Caco-2 (cell line): ENCODE measurements at regions of chr18 and their contacts with region 1.

Region 1: DNA sequence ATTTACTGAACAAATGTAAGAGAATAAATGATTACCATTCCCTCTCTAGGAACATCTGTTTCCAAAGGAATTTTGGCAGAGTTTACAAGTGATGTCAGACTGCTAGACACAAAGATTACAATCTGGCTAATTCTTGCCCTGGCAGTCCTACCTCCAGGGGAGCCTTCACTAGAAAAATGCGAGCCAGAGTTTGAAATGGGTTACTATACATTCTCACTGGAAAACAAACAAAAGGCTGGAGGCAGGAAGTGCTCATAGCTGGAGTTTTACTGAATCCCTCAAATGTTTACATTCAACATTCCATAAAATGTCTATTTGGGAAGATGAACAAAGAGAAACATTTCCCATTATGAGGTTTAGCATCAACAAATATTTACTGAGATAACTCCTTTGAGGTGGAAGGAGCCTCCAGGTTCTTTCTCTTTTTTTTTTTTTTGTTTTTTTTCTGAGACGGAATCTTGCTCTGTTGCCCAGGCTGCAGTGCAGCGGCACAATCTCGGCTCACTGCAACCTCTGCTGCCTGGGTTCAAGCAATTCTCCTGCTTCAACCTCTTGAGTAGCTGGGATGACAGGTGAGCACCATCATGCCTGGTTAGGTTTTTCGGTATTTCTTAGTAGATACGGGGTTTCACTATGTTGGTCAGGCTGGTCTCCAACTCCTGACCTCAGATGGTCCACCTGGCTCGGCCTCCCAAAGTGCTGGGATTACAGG is 129.0 kb upstream of the MAPRE2 start:
- DNase-seq: peak; percentile 57 to 67
- H3K4me3 ChIP-seq: no peak overlapping the region
- H3K4me3 Mint-ChIP-seq: no peak overlapping the region
- H3K27ac Mint-ChIP-seq: peak overlapping the region; percentile 25
- H3K4me1 ChIP-seq: peaks cover 34% of the 10 kb centered on the region
- H3K4me1 Mint-ChIP-seq: no peaks in the 10 kb centered on the region
- H3K27me3 ChIP-seq: no peaks in the 10 kb centered on the region
- H3K27me3 Mint-ChIP-seq: no peaks in the 10 kb centered on the region
- CTCF ChIP-seq: peak in 1 of 2 experiments; percentile 2

Region 2: DNA sequence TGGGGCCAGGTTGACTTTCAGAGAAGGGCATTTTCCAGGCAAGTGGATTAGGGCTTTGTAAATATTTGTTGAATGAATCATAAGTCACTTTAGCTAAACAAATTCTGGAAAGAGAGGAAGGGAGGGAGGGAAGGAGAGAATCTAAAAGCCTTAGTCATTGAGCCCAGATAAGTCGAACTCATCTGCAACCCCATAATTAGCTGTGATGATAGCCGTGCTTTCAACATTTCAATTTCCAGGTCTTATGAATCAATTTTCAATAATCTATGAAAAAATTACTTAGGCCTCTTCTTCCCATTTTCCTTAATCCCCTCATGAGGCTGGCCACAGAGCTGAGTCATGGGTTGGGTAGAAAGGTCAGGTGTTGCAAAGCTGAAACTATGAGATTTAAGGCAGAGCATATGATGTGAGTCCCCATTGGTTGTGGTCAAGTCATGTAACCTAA is 17.2 kb after region 1 on chr18:
- CTCF ChIA-PET with region 1: no interaction called
- POLR2A ChIA-PET with region 1: no interaction called
- intact Hi-C with region 1: loop called (anchors 1 kb)
- DNase-seq: peak; percentile 32 to 36
- H3K4me3 ChIP-seq: no peak overlapping the region
- H3K4me3 Mint-ChIP-seq: peak overlapping the region; percentile 11
- H3K27ac Mint-ChIP-seq: no peak overlapping the region
- H3K4me1 ChIP-seq: peaks cover 20% of the 10 kb centered on the region
- H3K4me1 Mint-ChIP-seq: peaks cover 10% of the 10 kb centered on the region
- H3K27me3 ChIP-seq: no peaks in the 10 kb centered on the region
- H3K27me3 Mint-ChIP-seq: no peaks in the 10 kb centered on the region
- CTCF ChIP-seq: no peak

Region 3: GRCh38 chr18:34957119-34957863 is 45.1 kb after region 1 on chr18:
- CTCF ChIA-PET with region 1: no interaction called
- POLR2A ChIA-PET with region 1: no interaction called
- intact Hi-C with region 1: loop called (anchors 5 kb)
- DNase-seq: no peak
- H3K4me3 ChIP-seq: no peak overlapping the region
- H3K4me3 Mint-ChIP-seq: no peak overlapping the region
- H3K27ac Mint-ChIP-seq: no peak overlapping the region
- H3K4me1 ChIP-seq: peaks cover 27% of the 10 kb centered on the region
- H3K4me1 Mint-ChIP-seq: peaks cover 20% of the 10 kb centered on the region
- H3K27me3 ChIP-seq: no peaks in the 10 kb centered on the region
- H3K27me3 Mint-ChIP-seq: no peaks in the 10 kb centered on the region
- CTCF ChIP-seq: no peak